CD4-positive, alpha-beta memory T cell (primary cell): ENCODE measurements at regions of chr15 and their contacts with region 1.

Region 1: GRCh38 chr15:53197426-53197839 is 407.3 kb upstream of the ONECUT1 start:
- DNase-seq: peak in 1 of 5 donors; percentile 2
- H3K4me3 ChIP-seq: no peak overlapping the region
- H3K4me3 Mint-ChIP-seq: no peak overlapping the region
- H3K27ac ChIP-seq: no peak overlapping the region
- H3K27ac Mint-ChIP-seq: no peak overlapping the region
- H3K4me1 ChIP-seq: no peaks in the 10 kb centered on the region
- H3K4me1 Mint-ChIP-seq: peaks cover 0 to 6% (median 2%) of the 10 kb centered on the region in 4 donors
- H3K27me3 ChIP-seq: no peaks in the 10 kb centered on the region
- H3K27me3 Mint-ChIP-seq: peaks cover 0 to 10% of the 10 kb centered on the region in 2 donors

Region 2: DNA sequence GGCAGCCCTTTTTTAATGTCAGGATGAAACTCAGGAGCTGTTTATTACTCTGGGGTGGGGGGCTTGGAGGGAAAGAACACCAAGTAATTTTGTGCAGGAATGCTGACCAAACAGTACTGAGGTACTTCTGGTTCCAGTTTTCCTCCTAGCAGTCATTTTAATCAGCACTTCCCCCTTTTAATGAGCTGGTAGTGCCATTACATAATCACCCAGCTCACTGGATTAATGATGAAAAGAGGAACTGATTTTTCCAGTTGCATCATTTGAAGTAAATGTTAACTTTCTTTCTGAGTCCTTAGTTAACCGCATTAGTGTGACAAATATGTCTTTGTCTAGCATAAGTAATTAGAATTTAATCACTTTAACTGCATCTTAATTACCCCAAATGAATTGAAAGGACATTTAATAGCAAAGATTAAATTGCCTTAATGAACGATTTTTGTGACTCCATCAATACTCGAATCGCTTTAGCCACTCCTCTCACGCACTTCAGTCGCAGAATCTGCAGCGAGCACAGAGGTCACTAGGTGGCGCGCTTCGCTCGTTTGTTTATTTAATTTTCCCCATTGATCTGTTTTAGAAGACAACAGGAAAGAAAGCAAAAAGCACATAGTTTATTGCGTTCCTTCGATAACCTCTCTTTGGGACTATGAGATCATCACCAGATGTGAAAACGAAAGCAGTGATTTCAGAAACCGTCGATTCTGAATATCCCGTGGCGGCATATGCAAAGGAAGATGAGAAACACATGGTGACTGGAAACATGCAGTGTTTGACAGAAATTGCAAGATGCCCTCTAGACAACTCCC is 417.1 kb before region 1 on chr15:
- CTCF ChIA-PET with region 1: no interaction called
- POLR2A ChIA-PET with region 1: no interaction called
- intact Hi-C with region 1: loop called (anchors 5 kb)
- DNase-seq: peak; percentile 61 to 73 (median 65)
- H3K4me3 ChIP-seq: no peak overlapping the region
- H3K4me3 Mint-ChIP-seq: peak overlapping the region in 7 of 8 donors; percentile 1 to 80 (median 40)
- H3K27ac ChIP-seq: no peak overlapping the region
- H3K27ac Mint-ChIP-seq: peak overlapping the region in 1 of 7 donors; percentile 46
- H3K4me1 ChIP-seq: peaks cover 17% of the 10 kb centered on the region
- H3K4me1 Mint-ChIP-seq: peaks cover 7 to 28% (median 17%) of the 10 kb centered on the region in 4 donors
- H3K27me3 ChIP-seq: peaks cover 47% of the 10 kb centered on the region
- H3K27me3 Mint-ChIP-seq: peaks cover 63 to 78% of the 10 kb centered on the region in 2 donors